H1 (cell line): ENCODE measurements at regions of chr11 and their contacts with region 1.

Region 1: GRCh38 chr11:15276621-15277020 is 161.9 kb downstream of the INSC start:
- DNase-seq: no peak
- H3K4me3 ChIP-seq: no peak overlapping the region
- H3K27ac ChIP-seq: no peak overlapping the region
- H3K4me1 ChIP-seq: no peaks in the 10 kb centered on the region
- H3K27me3 ChIP-seq: no peaks in the 10 kb centered on the region
- CTCF ChIP-seq: peak in 2 of 3 experiments; percentile 48 to 50; a peak in 3 of 4 replicates
- EP300 ChIP-seq: no peak
- POLR2A ChIP-seq: no peak
- RAD21 ChIP-seq: peak; percentile 72 to 77

Region 2: DNA sequence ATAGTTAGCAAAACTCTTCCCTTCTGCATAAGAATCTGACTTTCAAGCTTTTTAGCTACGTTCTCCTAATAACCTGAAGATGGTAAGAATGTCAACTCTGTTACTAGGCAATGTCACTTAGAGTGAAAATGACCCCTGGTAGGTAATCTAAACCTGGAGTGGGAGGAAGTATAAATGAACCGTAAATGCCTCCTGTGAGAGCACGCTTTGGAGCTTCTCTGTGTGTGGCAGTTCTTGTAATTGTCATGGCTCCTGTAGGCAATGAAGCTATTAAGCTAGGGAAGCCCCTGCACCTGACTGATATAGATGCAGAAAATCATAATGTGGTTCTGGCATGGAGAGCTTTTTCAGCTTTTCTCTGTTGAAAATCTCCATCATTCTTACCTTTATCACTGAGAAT is 333.9 kb before region 1 on chr11:
- CTCF ChIA-PET with region 1: no interaction called
- POLR2A ChIA-PET with region 1: no interaction called
- DNase-seq: no peak
- H3K4me3 ChIP-seq: no peak overlapping the region
- H3K27ac ChIP-seq: no peak overlapping the region
- H3K4me1 ChIP-seq: no peaks in the 10 kb centered on the region
- H3K27me3 ChIP-seq: no peaks in the 10 kb centered on the region
- CTCF ChIP-seq: no peak
- EP300 ChIP-seq: no peak
- POLR2A ChIP-seq: no peak
- RAD21 ChIP-seq: no peak

Region 3: GRCh38 chr11:15145615-15146014 is 131.0 kb before region 1 on chr11:
- CTCF ChIA-PET with region 1: no interaction called
- POLR2A ChIA-PET with region 1: no interaction called
- DNase-seq: no peak
- H3K4me3 ChIP-seq: no peak overlapping the region
- H3K27ac ChIP-seq: no peak overlapping the region
- H3K4me1 ChIP-seq: peaks cover 0 to 7% (median 3%) of the 10 kb centered on the region in 4 experiments; a peak in 3 of 7 replicates
- H3K27me3 ChIP-seq: no peaks in the 10 kb centered on the region
- CTCF ChIP-seq: no peak
- EP300 ChIP-seq: no peak
- POLR2A ChIP-seq: no peak
- RAD21 ChIP-seq: no peak

Region 4: DNA sequence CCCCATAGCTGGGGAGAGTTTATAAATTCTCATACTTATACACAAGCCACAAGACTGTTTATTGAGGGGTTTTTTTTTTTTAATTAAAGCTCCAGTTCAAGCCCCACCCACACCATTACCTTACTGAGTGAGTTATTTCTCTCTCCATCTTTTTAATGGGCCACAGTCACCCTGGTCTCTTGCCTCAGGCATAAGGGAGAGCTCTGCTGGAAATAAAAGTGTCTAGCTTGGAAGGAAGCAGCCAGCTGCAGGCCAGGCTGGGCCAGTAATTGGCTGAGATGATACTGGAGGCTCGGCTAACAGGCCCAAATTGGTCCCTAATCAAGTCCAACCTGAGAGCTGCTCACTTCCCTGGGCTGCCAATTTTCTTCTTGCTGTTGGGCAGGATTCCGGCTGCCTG is 12.2 kb after region 1 on chr11:
- CTCF ChIA-PET with region 1: interaction called, 10 read pairs
- POLR2A ChIA-PET with region 1: no interaction called
- DNase-seq: no peak
- H3K4me3 ChIP-seq: no peak overlapping the region
- H3K27ac ChIP-seq: no peak overlapping the region
- H3K4me1 ChIP-seq: peaks cover 0 to 2% (median 0%) of the 10 kb centered on the region in 4 experiments; a peak in 2 of 7 replicates
- H3K27me3 ChIP-seq: no peaks in the 10 kb centered on the region
- CTCF ChIP-seq: no peak
- EP300 ChIP-seq: no peak
- POLR2A ChIP-seq: no peak
- RAD21 ChIP-seq: no peak

Region 5: DNA sequence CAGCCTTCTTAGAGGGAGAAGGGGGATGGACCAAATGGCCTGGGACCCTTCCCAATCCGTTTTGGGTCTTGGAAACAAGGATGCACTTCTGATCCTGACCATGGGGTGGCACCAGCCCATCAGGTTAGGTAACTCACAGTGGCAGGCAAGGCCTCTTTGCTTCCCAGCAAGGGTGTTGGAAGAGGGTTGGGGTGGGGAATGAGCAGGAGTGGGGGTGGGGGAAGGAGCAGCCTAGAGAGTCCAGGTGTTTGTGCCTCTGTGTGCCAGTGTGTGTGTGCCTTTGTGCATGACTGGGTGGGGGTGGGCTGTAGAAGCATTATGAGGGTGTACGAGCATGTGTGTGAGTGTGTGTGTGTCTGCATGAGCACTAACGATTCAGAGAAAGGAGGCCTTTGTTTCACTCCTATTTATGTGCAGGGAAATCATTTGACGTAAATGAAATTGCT is 51.2 kb after region 1 on chr11:
- CTCF ChIA-PET with region 1: interaction called, 10 read pairs
- POLR2A ChIA-PET with region 1: no interaction called
- DNase-seq: peak; percentile 60 to 96
- H3K4me3 ChIP-seq: no peak overlapping the region
- H3K27ac ChIP-seq: no peak overlapping the region
- H3K4me1 ChIP-seq: peaks cover 0 to 3% (median 1%) of the 10 kb centered on the region in 4 experiments; a peak in 2 of 7 replicates
- H3K27me3 ChIP-seq: no peaks in the 10 kb centered on the region; a peak in 2 of 7 replicates
- CTCF ChIP-seq: peak; percentile 86 to 90 (median 89)
- EP300 ChIP-seq: no peak
- POLR2A ChIP-seq: no peak
- RAD21 ChIP-seq: peak; percentile 98 to 99